Mammary epithelial cell (primary cell): ENCODE measurements at regions of chr17 and their contacts with region 1.

Region 1: GRCh38 chr17:29012535-29012934 is 6.7 kb upstream of the SEZ6 start:
- DNase-seq: no peak
- H3K4me3 ChIP-seq: no peak overlapping the region
- H3K27ac ChIP-seq: no peak overlapping the region
- H3K4me1 ChIP-seq: no peaks in the 10 kb centered on the region
- H3K27me3 ChIP-seq: no peaks in the 10 kb centered on the region
- CTCF ChIP-seq: no peak

Region 2: DNA sequence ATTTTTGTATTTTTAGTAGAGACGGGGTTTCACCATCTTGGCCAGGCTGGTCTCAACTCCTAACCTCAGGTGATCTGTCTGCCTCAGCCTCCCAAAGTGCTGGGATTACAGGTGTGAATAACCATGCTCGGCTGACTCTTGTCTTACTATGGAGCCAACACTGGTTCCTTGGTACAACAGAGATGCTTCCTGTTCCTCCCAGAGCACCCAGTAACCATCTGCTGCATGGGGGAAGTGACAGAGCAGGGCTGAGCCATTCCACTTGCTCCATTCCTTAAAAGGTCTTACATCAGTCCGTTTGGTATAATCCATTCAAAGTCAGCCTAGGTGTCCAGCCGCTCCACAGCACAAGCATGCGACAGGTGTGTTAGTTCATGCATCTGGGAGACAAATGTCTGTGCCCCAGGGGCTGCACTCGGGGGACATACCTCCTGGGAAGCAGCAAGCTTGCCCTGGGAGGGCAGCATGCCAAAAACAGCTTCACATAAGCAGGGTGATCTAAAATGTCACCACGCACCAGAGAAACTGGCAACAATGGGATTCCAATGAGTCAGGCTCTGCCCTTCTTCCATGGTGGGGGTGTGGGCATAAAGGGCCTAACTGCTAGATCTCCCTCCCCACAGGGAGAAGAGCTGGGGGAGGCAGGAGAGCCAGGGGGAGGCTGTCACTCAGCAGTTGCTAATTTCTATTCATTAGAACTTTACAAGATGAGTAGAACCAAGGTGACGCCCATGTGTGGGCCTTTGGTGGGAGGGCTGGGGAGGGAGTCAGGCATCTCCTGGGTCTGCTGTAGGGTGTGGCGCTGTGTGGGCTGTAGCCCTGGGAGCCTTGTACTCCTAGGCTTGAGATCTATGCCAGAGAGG is 65.9 kb after region 1 on chr17:
- CTCF ChIA-PET with region 1: no interaction called
- dilution Hi-C with region 1: loop called (anchors 5 kb)
- in situ Hi-C with region 1: no loop called
- intact Hi-C with region 1: no loop called
- DNase-seq: no peak
- H3K4me3 ChIP-seq: no peak overlapping the region
- H3K27ac ChIP-seq: no peak overlapping the region
- H3K4me1 ChIP-seq: no peaks in the 10 kb centered on the region
- H3K27me3 ChIP-seq: no peaks in the 10 kb centered on the region
- CTCF ChIP-seq: no peak